ENCODE measurements at regions of chr15 and their contacts with region 1.

Region 1: DNA sequence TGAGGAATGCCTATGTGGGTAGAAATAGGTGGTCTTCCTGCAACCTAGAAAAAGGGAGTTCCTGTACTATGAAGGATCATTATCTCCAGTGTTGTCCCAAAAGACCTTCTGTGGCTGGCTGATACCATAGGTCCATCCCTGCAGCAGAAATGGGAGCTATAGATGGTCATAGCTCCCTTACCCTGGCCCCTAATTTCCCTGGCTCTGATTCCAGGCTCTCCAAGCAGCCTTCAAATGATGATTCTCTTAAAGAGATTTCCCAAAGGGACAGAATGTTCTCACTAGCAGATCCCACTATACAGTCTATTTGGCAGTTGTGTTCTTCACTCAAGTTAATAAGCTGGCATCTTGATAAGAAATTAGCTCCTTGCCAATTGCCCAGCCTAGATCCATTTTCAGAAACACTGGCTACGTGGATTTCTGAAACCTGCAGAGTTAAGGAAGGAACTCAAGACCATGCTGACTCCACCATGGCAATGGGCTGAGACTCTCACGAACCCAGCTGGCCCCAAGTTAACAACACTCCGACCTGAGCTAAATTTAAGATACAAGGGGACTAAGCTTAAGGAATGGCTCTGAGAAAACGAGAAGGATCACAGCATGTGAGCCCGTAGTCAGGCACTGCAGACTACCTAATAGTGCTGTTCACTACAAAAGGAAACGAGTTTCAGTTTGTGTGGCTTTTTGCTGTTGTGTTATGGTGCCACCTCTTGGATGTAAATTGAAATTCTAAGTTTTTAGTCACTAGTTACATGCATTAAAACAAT is 11.4 kb downstream of the C15orf40 start:
- ATAC-seq: peak in 6 of 8 experiments; percentile 24 to 92 (median 75)
- H3K4me3 ChIP-seq: no peak overlapping the region
- H3K27ac ChIP-seq: no peak overlapping the region
- H3K4me1 ChIP-seq: no peaks in the 10 kb centered on the region

Region 2: GRCh38 chr15:82849556-82850512 is 150.3 kb before region 1 on chr15:
- in situ Hi-C with region 1: loop called in 1 of 9 experiments (anchors 10 kb)
- ATAC-seq: peak; percentile 83 to 90 (median 88)
- H3K4me3 ChIP-seq: no peak overlapping the region
- H3K27ac ChIP-seq: peak overlapping the region in 1 of 2 donors; percentile 50
- H3K4me1 ChIP-seq: peaks cover 40 to 41% of the 10 kb centered on the region in 2 donors

Measured in motor neuron (in vitro differentiated cells).